ENCODE measurements at regions of chr5 and their contacts with region 1.

Region 1: DNA sequence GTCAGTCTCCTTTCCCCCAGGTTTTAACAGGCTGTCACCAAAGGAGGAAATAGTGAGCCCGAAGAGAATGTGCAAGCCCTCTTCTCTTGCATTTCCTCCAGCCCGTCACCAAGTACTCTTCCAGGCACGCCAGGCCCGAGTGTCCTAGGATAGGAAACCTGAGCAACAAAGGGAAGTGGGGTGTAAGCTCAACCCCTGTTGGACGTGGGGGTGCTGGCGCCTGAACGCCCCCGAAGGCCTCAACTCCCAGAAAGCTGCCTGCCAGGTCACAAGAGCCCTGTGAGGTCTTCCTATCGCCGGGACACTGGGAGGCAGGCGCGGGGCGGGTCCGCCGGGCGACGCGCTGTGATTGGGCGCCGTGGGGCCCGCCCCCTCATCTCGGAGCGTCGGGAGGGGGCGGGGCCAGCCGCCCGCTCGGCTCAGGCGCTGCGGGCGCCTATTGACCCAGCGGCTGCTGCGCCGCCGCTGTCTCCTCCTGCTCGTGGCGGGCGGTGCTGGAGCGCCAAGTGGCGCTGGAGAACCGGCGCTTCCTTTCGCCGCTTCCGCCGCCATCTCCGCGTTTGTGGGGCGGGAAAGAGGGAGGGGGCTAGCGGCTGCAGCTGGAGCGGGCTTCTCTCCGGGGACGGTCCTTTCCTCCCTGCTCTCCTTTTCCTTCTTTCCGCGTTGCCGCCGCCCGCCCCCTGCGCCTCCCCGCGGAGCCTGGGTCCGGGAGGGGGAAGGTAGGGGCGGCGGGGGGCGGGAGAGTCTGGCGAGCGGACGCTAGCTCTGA is 572 bp upstream of the MAN2A1 start:
- DNase-seq: peak; percentile 77 to 83 (median 79)
- H3K4me3 ChIP-seq: peak overlapping the region; percentile 30 to 75
- H3K4me3 Mint-ChIP-seq: peak overlapping the region; percentile 88 to 96 (median 92)
- H3K27ac ChIP-seq: peak overlapping the region; percentile 88
- H3K27ac Mint-ChIP-seq: peak overlapping the region; percentile 79 to 97 (median 94)
- H3K4me1 ChIP-seq: peaks cover 34% of the 10 kb centered on the region
- H3K4me1 Mint-ChIP-seq: peaks cover 25 to 37% (median 31%) of the 10 kb centered on the region in 4 donors
- H3K27me3 ChIP-seq: no peaks in the 10 kb centered on the region
- H3K27me3 Mint-ChIP-seq: no peaks in the 10 kb centered on the region

Region 2: DNA sequence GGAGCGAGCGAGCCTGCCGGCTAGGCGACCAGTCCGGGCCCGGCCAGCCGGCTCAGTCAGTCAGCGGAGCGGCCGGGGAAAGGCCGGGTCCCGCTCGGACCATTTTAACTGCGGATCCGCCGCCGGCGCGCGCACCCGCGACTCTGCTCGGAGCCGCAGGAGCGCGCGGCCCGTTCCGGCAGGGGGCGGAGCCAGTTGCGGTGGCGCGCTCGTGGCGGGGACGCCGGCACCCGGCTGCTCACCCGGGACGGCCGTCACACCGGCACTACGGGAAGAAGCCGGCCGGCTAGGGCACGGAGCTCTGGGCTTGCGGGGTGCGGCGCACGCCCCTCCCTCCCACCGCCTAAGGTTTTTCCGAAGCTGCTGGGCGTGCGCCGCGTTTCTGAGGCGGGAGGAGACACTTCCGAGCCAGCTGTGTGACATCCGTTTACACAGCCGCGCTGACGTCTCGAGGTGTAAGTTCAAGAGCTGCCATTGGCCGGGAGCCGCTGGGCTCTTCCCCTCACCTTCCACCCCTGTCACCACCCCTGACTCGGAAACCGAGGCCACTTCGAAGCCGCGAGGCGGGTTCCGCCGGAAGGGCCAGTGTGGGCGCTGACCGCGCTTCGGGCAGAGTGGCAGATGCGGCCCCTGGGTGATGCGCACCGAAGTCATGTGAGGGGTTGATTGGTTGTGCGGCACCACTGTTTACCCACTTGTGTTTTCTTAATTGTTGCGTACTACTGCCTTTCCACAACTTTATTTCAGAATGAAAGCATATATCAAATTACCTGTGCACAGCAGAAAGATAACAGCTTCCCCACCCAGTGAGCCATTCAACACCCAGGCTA is 1307.0 kb before region 1 on chr5 and contains the start of gene FBXL17:
- CTCF ChIA-PET with region 1: no interaction called
- POLR2A ChIA-PET with region 1: interaction called, 24 read pairs
- intact Hi-C with region 1: loop called (anchors 1 kb)
- DNase-seq: peak; percentile 92 to 96 (median 94)
- H3K4me3 ChIP-seq: peak within 1 kb of the TSS; percentile 71 to 82
- H3K4me3 Mint-ChIP-seq: peak within 1 kb of the TSS; percentile 86 to 98 (median 90)
- H3K27ac ChIP-seq: peak within 1 kb of the TSS; percentile 91
- H3K27ac Mint-ChIP-seq: peak within 1 kb of the TSS; percentile 87 to 99 (median 98)
- H3K4me1 ChIP-seq: peaks cover 36% of the 10 kb centered on the region
- H3K4me1 Mint-ChIP-seq: peaks cover 25 to 47% (median 34%) of the 10 kb centered on the region in 4 donors
- H3K27me3 ChIP-seq: no peaks in the 10 kb centered on the region
- H3K27me3 Mint-ChIP-seq: no peaks in the 10 kb centered on the region
- total RNA-seq, gene FBXL17: 23.3 to 27.5 TPM

Region 3: DNA sequence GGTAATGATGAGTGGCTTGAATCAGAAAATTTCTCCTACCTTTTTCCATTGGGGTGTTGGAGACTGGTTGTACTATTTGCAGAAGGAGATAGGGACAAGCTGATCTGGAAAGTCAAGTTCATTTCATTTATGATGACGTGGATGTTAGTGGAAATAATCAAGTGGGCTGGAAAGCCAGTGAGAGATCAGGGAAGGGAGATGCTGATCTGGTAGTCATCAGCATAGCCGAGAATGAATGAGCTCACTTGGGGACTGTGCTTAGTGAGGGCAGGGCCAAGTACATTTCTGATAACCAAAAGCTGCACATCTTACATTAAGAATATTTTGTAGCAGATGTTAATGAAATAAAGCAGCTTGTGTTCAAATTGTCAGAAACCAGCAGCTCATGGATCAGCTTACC is 12.6 kb after region 1 on chr5:
- CTCF ChIA-PET with region 1: interaction called, 7 read pairs
- POLR2A ChIA-PET with region 1: interaction called, 18 read pairs
- intact Hi-C with region 1: loop called (anchors 2 kb)
- DNase-seq: no peak
- H3K4me3 ChIP-seq: no peak overlapping the region
- H3K4me3 Mint-ChIP-seq: peak overlapping the region in 1 of 8 donors; percentile 60
- H3K27ac ChIP-seq: no peak overlapping the region
- H3K27ac Mint-ChIP-seq: peak overlapping the region in 1 of 7 donors; percentile 78
- H3K4me1 ChIP-seq: peaks cover 91% of the 10 kb centered on the region
- H3K4me1 Mint-ChIP-seq: peaks cover 64 to 90% (median 76%) of the 10 kb centered on the region in 4 donors
- H3K27me3 ChIP-seq: no peaks in the 10 kb centered on the region
- H3K27me3 Mint-ChIP-seq: no peaks in the 10 kb centered on the region

Region 4: DNA sequence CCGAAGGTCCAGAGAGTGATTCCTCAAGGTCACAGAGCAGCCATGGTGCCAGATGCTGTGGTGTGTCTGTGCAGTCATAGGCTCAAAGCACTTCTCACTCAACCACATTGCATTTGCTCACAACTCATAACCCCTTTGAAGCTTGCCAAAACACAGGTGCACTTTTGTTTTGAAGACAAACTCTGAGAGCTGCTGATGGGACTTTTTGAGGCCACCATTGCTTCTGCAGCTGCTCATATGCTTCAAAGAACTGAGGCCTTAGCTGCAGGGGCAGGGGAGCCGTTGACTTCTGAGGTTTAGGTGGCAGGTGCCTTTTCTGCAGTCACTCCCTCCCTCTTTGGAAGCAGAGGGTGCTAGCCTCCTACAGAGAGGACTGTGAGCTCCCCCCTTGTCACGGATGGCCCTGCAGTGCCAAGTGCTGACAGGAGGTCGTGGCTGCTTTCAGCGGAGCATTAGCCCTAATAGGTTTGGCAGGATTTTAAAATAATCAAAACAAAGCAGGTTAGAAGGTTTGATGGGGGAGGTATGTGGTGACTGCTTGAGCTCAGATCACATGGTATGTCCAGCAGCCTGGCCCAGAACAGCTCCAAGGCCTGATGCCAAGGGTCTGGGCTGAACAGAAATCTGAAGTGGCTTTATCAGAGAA is 232.7 kb after region 1 on chr5:
- CTCF ChIA-PET with region 1: interaction called, 11 read pairs
- POLR2A ChIA-PET with region 1: interaction called, 62 read pairs
- intact Hi-C with region 1: loop called (anchors 1 kb)
- DNase-seq: peak; percentile 70 to 81 (median 75)
- H3K4me3 ChIP-seq: peak overlapping the region in 1 of 2 donors; percentile 4
- H3K4me3 Mint-ChIP-seq: peak overlapping the region; percentile 57 to 81 (median 74)
- H3K27ac ChIP-seq: peak overlapping the region; percentile 37
- H3K27ac Mint-ChIP-seq: peak overlapping the region; percentile 85 to 97 (median 92)
- H3K4me1 ChIP-seq: peaks cover 44% of the 10 kb centered on the region
- H3K4me1 Mint-ChIP-seq: peaks cover 32 to 46% (median 39%) of the 10 kb centered on the region in 4 donors
- H3K27me3 ChIP-seq: no peaks in the 10 kb centered on the region
- H3K27me3 Mint-ChIP-seq: no peaks in the 10 kb centered on the region

Region 5: DNA sequence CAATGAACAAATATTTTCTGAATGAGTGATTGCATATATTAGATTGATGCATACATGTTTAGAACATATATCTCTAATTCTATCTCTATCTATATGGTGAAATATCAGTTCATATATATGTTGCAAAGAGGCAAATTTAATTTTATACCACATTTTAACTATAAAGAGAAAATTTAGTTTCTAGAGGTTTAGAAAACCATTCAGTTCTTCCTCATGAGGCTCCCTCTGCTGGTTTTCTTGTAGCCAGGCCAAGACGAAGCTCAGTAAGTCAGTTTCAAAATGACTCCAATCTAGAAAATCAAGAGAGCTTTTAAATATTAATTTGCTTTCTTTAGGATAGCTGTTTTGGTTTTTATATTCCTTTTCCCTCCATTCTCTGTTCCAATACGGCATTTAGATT is 725.2 kb after region 1 on chr5:
- CTCF ChIA-PET with region 1: no interaction called
- POLR2A ChIA-PET with region 1: no interaction called
- intact Hi-C with region 1: loop called (anchors 2 kb)
- DNase-seq: no peak
- H3K4me3 ChIP-seq: no peak overlapping the region
- H3K4me3 Mint-ChIP-seq: no peak overlapping the region
- H3K27ac ChIP-seq: no peak overlapping the region
- H3K27ac Mint-ChIP-seq: no peak overlapping the region
- H3K4me1 ChIP-seq: no peaks in the 10 kb centered on the region
- H3K4me1 Mint-ChIP-seq: peaks cover 0 to 3% (median 0%) of the 10 kb centered on the region in 4 donors
- H3K27me3 ChIP-seq: peaks cover 3% of the 10 kb centered on the region
- H3K27me3 Mint-ChIP-seq: peaks cover 0 to 2% of the 10 kb centered on the region in 2 donors

Region 6: DNA sequence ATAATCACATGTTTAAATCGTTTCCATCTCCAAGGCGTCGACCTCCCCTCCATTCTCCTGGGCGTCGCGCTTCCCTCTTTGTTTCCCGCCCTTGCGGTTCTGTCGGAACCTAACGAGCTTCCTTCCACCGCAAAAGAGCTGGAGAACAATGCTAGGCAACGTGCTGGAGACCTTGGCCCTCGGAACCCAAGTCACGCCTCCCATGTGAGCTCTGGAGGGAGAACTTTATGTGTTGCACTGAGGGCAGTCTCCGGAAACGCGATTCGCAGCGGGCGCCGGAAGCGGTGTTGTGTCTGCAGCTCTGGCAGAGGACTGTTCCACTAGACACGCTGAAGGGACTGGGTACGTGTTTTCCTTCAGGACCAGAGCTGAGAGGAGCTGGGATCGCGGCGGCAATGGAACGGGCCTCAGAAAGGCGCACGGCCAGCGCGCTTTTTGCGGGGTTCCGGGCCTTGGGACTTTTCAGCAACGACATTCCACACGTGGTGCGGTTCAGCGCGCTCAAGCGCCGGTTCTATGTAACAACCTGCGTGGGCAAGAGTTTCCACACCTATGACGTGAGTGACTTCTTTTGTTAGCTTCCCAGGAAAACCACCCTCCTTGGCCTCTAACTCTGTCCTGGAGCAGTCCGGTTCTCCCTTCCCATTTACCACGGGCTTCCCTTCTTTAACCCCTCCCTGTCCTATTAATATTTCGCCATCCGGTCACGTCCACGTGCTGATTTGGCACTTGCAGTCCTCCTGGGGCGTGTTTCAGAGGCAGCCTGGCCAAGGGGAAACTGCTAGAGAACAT is 1403.1 kb after region 1 on chr5 and contains the start of gene WDR36:
- CTCF ChIA-PET with region 1: no interaction called
- POLR2A ChIA-PET with region 1: no interaction called
- intact Hi-C with region 1: loop called (anchors 5 kb)
- DNase-seq: peak; percentile 85 to 91 (median 87)
- H3K4me3 ChIP-seq: peak within 1 kb of the TSS; percentile 82 to 90
- H3K4me3 Mint-ChIP-seq: peak within 1 kb of the TSS; percentile 90 to 98 (median 97)
- H3K27ac ChIP-seq: peak within 1 kb of the TSS; percentile 73
- H3K27ac Mint-ChIP-seq: peak within 1 kb of the TSS; percentile 83 to 98 (median 96)
- H3K4me1 ChIP-seq: peaks cover 25% of the 10 kb centered on the region
- H3K4me1 Mint-ChIP-seq: peaks cover 15 to 34% (median 27%) of the 10 kb centered on the region in 4 donors
- H3K27me3 ChIP-seq: no peaks in the 10 kb centered on the region
- H3K27me3 Mint-ChIP-seq: peaks cover 1 to 7% of the 10 kb centered on the region in 2 donors
- total RNA-seq, gene WDR36: 26.3 to 27.6 TPM

Measured in CD4-positive, alpha-beta memory T cell (primary cell).